AG04450 (cell line): ENCODE measurements at regions of chr12 and their contacts with region 1.

Region 1: GRCh38 chr12:113203852-113204760 is 17.2 kb upstream of the TPCN1 start:
- DNase-seq: no peak
- H3K4me3 ChIP-seq: no peak overlapping the region
- H3K27ac ChIP-seq: no peak overlapping the region
- H3K27me3 ChIP-seq: no peaks in the 10 kb centered on the region
- CTCF ChIP-seq: no peak

Region 2: GRCh38 chr12:113184900-113185773 is 19.0 kb before region 1 on chr12 and contains the starts of genes DDX54 and RITA1:
- CTCF ChIA-PET with region 1: no interaction called
- POLR2A ChIA-PET with region 1: no interaction called
- DNase-seq: peak; percentile 66
- H3K4me3 ChIP-seq: peak within 1 kb of the TSS; percentile 87
- H3K27ac ChIP-seq: peak within 1 kb of the TSS; percentile 89
- H3K27me3 ChIP-seq: no peaks in the 10 kb centered on the region
- CTCF ChIP-seq: no peak
- polyA plus RNA-seq, gene DDX54: 26.9 and 32.1 TPM in 2 replicates
- polyA plus RNA-seq, gene RITA1: 9.0 and 11.3 TPM in 2 replicates

Region 3: GRCh38 chr12:113358381-113359132 is 154.5 kb after region 1 on chr12 and contains the start of gene PLBD2:
- CTCF ChIA-PET with region 1: interaction called, 5 read pairs
- POLR2A ChIA-PET with region 1: interaction called, 15 read pairs
- DNase-seq: peak; percentile 81
- H3K4me3 ChIP-seq: peak within 1 kb of the TSS; percentile 92
- H3K27ac ChIP-seq: no peak within 1 kb of the TSS
- H3K27me3 ChIP-seq: peaks cover 2% of the 10 kb centered on the region
- CTCF ChIP-seq: no peak
- polyA plus RNA-seq, gene PLBD2: 16.0 and 32.7 TPM in 2 replicates